Cardiac septum (tissue), 1 donor: ENCODE measurements at regions of chr3 and their contacts with region 1.

Region 1: DNA sequence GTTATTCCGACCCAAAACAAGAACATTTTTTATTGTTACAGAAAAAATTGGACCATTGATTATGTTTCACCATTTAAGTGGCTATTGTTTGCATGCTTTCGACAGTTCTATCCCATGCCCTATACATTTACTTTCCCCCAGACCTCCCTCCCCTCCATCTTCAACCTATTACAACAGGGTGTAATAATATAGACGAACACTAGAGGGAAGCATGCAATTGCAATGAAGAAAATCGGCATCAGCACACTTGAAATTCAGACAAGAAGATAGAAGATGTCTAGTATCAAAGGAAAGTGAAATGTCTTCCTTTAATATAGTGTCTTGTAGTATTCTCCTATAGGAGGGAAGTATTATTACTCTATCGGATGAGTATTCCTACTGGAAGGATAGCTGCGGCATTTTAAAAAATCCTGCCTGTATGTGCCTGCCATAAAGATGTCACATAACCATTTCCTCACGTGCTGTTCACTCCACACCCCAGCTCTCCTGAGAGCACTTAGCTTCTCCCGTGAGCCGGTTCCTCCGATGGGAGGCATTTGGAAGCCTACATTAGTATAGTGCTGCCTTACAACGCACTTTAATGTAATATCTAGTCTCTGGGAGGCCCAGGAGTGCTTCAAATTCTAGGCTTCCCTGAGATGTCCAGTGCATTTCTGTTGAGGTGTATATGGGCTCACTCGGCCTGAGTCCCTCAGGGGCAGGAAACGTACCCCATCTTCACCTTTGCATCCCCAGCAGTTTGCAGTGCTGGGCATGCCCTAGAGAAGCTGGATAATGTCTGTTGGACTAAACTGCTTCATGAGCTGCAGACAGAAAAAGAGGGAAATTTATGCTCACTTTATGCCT is 17.8 kb upstream of the ERICH6 start:
- DNase-seq: no peak

Region 2: GRCh38 chr3:151062611-151063010 is 341.1 kb after region 1 on chr3:
- intact Hi-C with region 1: no loop called
- DNase-seq: no peak

Region 3: DNA sequence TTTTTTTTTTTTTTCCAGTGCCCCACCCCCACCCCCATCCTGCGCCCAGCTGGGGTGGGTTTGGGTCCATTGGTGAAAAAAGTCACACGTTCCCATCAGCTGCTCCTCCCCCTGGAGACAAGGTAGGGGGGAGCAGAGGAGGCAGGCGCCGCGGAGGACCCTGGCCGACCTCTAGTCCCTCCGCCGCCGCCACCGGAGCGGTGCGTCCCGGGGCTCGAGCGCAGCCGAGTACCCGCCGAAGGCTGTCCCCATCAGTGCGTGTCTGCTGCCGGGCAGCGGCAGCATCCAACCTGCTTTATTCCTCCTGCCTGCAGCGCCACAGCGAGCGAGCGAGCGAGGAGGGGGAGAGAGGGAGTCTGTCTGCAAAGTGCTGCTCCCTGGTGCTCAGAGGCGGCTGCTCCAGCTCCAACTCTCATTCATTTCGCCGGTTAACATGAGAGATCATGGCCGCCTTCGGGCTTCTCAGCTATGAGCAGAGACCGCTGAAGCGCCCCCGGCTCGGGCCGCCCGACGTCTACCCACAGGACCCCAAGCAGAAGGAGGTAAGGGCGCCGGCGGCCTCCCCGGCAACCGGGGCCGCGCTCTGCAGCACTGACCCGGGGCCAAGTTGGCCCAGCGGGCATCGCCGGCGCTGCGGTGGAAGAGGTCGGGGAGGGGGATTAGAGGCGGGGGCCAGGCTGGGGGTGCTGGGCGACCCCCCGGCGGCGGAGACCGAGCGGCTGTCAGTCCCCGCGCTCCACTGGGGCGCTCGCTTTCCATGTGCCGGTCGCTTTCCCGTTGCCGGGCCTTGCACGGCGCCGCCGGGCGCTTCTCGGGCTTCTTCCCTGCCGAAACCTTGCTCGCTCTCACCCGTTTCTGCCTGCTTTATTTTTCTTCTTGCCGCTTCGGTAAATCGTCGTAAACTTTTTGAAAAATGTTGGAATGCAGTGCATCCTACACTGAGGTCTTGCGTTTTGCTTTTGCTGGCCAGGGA is 365.3 kb after region 1 on chr3:
- intact Hi-C with region 1: loop called (anchors 5 kb)
- DNase-seq: peak; percentile 91